AG04449 (cell line): ENCODE measurements at regions of chr2 and their contacts with region 1.

Region 1: GRCh38 chr2:69375494-69376353 is 11.3 kb downstream of the GFPT1 start:
- DNase-seq: no peak
- H3K4me3 ChIP-seq: no peak overlapping the region
- CTCF ChIP-seq: peak; percentile 39

Region 2: GRCh38 chr2:69356471-69356870 is 19.3 kb before region 1 on chr2:
- CTCF ChIA-PET with region 1: interaction called, 25 read pairs
- POLR2A ChIA-PET with region 1: no interaction called
- DNase-seq: no peak
- H3K4me3 ChIP-seq: no peak overlapping the region
- CTCF ChIP-seq: no peak

Region 3: DNA sequence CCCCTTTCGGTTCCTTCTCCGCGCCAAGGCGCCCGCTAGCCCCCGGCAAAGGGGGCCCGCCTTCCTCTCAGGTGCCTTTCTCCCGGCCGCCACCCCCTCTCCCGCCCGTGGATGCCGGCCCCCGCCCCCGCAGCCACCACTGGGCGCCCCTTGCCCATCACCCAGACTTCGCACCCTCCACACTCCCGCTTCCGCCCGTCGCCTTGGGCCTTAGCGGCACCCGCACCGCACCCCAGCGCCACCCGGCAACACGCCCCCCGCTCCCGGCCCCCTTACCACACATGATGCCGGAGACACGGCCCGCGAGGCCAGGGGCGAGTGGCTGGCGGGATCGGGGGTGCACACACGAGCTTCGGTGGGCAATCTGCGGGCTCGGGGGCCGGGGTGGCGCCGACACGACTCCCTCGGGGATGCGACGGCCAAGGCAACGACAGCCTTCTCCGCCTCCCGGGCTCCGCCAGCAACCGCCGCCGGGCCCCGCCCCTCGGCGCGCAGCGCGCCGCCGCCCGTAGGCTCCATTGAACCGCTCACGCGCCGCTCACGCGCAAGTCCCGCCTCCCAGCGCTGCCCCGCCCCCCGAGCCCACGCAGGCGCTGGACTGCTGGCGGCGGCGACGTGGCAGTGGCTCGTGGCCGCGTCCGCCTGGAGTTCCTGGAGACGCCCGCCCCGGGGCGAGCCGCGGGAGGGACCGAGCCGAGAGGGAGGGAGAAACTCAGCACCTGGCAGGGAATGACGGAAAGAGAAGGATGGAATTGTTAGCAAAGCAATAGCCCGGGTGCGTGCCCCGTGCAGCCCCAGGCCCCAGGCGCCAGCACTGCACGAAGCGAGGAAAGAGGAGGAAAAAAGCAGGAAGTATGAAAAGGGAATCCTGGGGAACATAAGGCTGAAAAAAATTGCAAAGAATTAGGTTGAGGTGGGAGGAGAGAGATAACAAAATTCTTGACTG is 11.3 kb after region 1 on chr2 and contains the start of gene GFPT1:
- CTCF ChIA-PET with region 1: interaction called, 32 read pairs
- POLR2A ChIA-PET with region 1: interaction called, 5 read pairs
- DNase-seq: peak; percentile 50
- H3K4me3 ChIP-seq: peak within 1 kb of the TSS; percentile 87
- CTCF ChIP-seq: no peak

Region 4: GRCh38 chr2:69493268-69493667 is 117.5 kb after region 1 on chr2:
- CTCF ChIA-PET with region 1: no interaction called
- POLR2A ChIA-PET with region 1: no interaction called
- DNase-seq: no peak
- H3K4me3 ChIP-seq: no peak overlapping the region
- CTCF ChIP-seq: no peak